Cardiac septum (tissue), 1 donor: ENCODE measurements at regions of chr1 and their contacts with region 1.

Region 1: DNA sequence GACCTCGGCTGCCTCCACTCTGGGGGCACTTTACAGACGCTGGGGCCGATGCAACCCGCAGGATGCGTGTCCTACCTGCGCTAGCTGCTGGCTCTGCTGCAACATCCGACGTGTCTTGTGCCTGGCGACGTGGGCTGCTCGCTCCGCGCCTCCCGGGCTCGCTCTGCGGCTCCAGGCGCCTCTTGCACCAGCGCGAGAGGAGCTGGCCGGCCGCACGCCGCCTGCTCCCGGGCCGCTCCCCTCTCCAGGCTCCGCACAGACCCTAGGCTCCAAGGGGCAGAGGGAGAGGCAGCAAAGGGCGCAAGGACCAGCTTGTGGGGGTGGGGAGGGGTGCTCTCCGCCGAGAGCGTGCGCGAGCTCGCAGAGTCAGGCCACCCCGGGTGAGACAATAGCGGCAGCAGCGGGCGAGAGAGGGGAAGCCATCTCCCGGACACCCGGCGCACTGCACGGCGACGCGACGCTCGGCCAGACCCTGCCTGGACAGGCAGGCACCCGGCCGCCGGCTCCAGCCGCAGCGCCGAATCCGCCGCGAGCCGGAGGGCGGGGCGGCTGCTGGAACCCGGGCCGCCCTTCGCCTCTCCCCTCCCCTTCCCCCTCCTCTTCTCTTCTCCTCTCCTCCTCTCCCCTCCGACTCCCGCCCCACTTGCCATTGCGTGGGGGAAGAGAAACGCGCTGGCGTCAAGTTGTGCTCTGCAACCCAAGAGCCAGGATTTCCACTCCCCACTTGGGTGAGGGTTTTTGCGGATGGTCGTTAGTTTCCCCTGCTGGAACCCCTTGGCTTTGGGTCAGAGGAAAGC is at the start of gene PIK3C2B:
- DNase-seq: peak; percentile 90
- total RNA-seq, gene PIK3C2B: 28.8 TPM

Region 2: GRCh38 chr1:204446370-204447111 is 47.9 kb before region 1 on chr1:
- intact Hi-C with region 1: loop called (anchors 2 kb)
- DNase-seq: peak; percentile 85

Region 3: GRCh38 chr1:204465546-204466415 is 28.7 kb before region 1 on chr1:
- intact Hi-C with region 1: loop called (anchors 1 kb)
- DNase-seq: no peak

Region 4: GRCh38 chr1:204480515-204480914 is 14.0 kb before region 1 on chr1:
- intact Hi-C with region 1: loop called (anchors 1 kb)
- DNase-seq: no peak

Region 5: DNA sequence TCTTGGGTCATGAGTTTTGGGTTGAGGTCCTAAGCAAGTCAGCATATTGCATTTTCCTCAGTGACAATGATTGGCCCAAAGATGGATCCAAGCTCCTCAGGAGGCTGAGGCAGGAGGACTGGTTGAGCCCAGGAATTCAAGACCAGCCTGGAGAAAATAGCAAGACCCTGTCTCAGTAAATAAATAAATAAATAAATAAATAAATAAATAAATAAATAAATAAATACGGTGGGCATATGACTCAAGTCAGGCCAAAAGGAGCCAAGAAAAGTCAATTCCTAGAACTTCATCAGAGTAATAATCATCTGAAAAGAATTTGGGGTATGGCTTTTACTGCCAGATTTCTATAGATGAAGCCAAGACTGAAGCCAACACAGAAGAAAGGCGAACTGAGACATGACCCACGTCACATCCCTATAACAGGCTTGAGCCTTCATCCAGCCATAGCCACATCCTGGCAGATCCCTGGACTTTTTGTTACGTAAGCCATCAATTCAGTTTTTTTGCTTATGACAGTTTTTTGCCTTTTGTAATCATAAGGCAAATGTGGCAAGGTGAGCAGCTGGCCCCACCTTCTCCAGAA is 287.7 kb after region 1 on chr1:
- intact Hi-C with region 1: no loop called
- DNase-seq: no peak